GM10248 (cell line): ENCODE measurements at regions of chr5 and their contacts with region 1.

Region 1: DNA sequence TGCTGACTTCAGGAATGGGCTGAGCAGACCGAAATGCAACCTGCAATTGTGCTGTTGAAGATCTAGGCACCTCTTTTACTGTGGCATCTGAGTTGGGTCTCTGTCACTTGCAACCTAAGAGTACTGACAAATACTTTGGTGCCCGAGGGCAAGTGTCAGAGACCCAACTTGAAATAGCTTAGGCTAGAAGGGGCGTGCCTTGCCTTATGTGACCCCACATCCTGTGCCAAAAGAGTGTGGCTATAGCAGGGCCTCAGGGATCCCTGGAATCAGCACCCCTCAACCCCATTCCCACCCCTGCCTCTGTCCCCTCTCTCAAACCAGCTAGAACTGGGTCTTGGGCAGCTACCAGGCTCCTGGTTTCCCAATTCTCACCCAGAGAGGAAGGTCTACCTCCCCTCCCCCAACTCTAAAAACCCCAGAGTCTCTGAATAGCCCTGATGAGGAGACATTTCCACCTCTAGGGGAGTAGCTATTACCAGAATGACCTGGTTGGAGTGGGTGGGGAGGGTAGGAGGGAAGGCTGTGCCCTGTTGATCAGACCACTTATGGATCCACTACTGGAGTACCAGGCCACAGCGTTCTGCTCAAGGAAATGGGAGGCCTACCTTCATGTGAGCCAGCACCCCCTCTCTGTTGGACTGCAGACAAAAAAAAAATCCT is 17.5 kb downstream of the RAI14 start:
- DNase-seq: no peak
- CTCF ChIP-seq: no peak

Region 2: GRCh38 chr5:34686762-34687268 is 13.2 kb after region 1 on chr5:
- CTCF ChIA-PET with region 1: interaction called, 19 read pairs
- POLR2A ChIA-PET with region 1: no interaction called
- DNase-seq: no peak
- CTCF ChIP-seq: no peak